Dorsolateral prefrontal cortex (tissue), 120 donors: ENCODE measurements at regions of chr1 and their contacts with region 1.

Region 1: DNA sequence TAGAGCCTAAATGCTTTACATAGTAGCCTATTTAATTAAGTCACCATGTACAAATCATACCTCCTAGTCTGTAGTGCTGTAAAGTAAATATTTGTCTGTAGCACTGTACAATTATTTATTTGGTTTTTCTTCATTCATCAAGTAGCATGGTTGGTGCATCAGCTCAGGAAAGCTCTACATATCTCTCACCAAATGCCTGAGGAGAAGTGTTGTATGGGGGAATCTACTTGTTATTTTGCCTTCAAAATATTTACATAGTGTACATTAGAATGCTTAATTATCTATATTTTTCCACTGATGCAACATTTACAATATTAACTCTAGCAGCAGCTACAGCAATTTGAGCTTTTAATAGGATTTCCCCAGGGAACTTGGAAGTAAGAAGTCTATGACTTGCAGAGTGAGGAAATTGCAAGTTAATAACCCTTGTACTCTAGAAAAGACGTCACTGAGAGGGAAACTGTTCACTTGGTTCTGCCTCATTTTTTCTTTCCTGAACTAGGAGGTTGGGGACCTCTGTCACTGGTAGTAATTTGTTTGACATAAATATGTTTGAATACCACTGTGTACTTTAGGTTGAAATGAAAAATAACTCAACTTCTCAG is 207.4 kb downstream of the PDE4B start:
- DNase-seq: no peak
- H3K4me3 ChIP-seq: peak overlapping the region in 40 of 59 donors; percentile 6 to 85 (median 49)
- H3K27ac ChIP-seq: peak overlapping the region in 35 of 59 donors; percentile 13 to 95 (median 69)
- H3K27me3 ChIP-seq: no peaks in the 10 kb centered on the region
- CTCF ChIP-seq: no peak

Region 2: DNA sequence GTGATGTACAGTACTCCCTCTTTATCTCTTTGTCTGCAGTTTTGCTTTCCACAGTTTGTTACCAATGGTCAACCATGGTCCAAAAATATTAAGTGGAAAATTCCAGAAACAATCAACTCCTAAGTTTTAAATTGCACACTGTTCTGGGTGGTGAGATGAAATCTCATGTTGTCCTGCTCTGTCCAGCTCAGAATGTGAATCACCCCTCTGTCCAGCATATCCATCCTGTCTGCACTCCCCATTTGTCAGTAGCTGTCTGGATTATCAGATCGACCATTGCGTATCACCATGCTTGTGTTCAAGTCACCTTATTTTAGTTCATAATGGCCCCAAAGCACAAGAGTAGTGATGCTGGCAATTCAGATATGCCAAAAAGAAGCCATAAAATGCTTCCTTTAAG is 325.6 kb before region 1 on chr1:
- intact Hi-C with region 1: no loop called
- DNase-seq: no peak
- H3K4me3 ChIP-seq: no peak overlapping the region
- H3K27ac ChIP-seq: peak overlapping the region in 4 of 59 donors; percentile 52 to 86 (median 72)
- H3K27me3 ChIP-seq: no peaks in the 10 kb centered on the region
- CTCF ChIP-seq: no peak

Region 3: GRCh38 chr1:66048011-66048410 is 47.9 kb after region 1 on chr1:
- intact Hi-C with region 1: loop called in 1 of 2 experiments (anchors 5 kb)
- DNase-seq: no peak
- H3K4me3 ChIP-seq: peak overlapping the region in 1 of 59 donors; percentile 6
- H3K27ac ChIP-seq: peak overlapping the region in 40 of 59 donors; percentile 4 to 94 (median 60)
- H3K27me3 ChIP-seq: no peaks in the 10 kb centered on the region
- CTCF ChIP-seq: no peak

Region 4: GRCh38 chr1:66069976-66070876 is 70.1 kb after region 1 on chr1:
- intact Hi-C with region 1: loop called in 1 of 2 experiments (anchors 10 kb)
- DNase-seq: no peak
- H3K4me3 ChIP-seq: no peak overlapping the region
- H3K27ac ChIP-seq: peak overlapping the region in 5 of 59 donors; percentile 9 to 22 (median 14)
- H3K27me3 ChIP-seq: no peaks in the 10 kb centered on the region
- CTCF ChIP-seq: no peak

Region 5: GRCh38 chr1:66214901-66215300 is 214.8 kb after region 1 on chr1:
- intact Hi-C with region 1: no loop called
- DNase-seq: no peak
- H3K4me3 ChIP-seq: no peak overlapping the region
- H3K27ac ChIP-seq: peak overlapping the region in 8 of 59 donors; percentile 1 to 29 (median 20)
- H3K27me3 ChIP-seq: no peaks in the 10 kb centered on the region
- CTCF ChIP-seq: no peak